ENCODE measurements at regions of chr5 and their contacts with region 1.

Region 1: DNA sequence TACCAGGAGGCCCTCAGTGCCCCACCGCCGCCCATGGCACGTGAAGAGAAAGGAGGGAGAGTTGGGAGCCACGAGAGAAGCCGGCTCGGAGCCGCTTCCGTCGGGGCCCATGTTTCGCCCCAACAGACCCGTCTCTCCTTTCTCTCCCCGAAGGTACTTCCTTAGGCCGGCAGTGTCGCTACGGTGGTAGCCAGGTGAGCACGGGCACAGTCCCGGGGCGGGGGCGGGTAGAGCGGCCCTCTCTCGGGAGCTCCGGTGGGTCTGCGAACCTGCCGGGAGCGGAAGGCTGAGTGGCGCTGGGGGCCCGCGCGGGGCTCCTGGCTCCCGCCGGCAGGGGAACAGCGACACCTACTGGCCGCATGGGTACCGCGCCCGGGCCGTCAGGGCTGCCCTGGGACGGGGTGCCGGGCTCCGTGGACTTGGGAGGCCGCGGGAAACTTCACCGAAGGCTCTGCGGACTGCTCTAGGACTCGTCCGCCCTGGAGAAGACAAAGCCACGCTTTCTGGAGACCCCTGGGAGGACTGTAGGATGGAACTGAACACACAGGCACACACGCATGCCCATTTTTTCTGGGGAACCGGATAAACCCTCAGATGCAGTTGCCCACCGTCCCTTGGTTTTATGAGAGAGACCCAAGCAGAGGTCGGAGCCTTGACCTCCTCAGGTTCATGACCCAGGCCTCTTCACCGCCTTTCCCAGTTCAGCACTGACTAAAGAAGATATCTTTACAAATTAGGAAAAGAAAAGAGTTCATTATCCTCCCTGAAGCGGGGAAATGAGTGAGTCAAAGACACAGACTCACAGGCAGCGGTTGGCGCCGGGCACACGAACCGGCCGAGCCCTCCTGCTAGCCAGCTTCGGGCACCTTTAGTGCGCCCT is 202.5 kb downstream of the MEF2C start:
- DNase-seq: peak; percentile 77
- ATAC-seq: peak; percentile 77
- H3K4me3 Mint-ChIP-seq: peak overlapping the region; percentile 24
- H3K27ac Mint-ChIP-seq: no peak overlapping the region
- H3K4me1 Mint-ChIP-seq: peaks cover 11% of the 10 kb centered on the region
- H3K27me3 Mint-ChIP-seq: peaks cover 75% of the 10 kb centered on the region
- CTCF ChIP-seq: peak; percentile 96

Region 2: GRCh38 chr5:88140856-88141752 is 539.4 kb before region 1 on chr5:
- CTCF ChIA-PET with region 1: interaction called, 3 read pairs
- POLR2A ChIA-PET with region 1: no interaction called
- intact Hi-C with region 1: loop called (anchors 5 kb)
- DNase-seq: peak; percentile 93
- ATAC-seq: peak; percentile 94
- H3K4me3 Mint-ChIP-seq: no peak overlapping the region
- H3K27ac Mint-ChIP-seq: no peak overlapping the region
- H3K4me1 Mint-ChIP-seq: peaks cover 15% of the 10 kb centered on the region
- H3K27me3 Mint-ChIP-seq: peaks cover 38% of the 10 kb centered on the region
- CTCF ChIP-seq: peak; percentile 59

Region 3: DNA sequence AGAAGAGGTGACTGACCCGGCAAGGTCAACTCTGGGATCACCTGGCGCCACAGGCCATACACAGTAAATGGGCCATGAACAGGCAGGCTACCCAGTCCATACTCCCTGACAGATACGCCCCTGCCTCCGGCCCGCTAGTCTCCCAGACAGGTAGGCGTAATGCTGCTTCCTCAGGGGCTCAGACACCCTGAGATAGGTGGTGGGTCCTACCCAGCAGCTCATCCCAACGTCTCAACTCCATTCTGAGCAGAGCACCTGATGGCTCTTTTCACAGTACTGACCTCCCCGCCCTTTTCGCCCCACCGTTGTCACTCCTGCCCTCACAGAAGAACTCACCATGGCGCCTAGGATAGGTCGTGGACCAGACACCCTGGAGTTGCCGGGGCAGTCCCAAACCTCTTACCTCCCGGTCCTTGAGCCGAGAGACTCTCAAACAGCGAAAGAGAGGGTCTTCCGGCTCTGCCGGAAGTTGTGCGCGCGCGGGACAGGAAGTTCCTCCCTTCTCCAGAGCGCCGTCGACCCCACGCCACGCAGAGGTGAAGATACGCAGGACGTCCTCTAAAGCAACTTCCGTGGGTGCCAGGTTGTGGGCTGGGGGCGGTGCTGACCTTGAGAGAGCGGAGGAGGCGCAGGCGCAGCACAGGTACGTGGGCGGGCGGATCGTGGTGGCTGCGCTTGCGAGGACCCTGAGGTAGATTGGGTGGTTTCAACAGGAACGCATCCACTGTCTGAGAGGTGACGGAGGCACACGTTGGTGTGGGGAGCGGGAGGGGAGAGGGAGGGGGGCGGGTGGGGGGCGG is 411.9 kb before region 1 on chr5 and contains the start of gene TMEM161B:
- CTCF ChIA-PET with region 1: no interaction called
- POLR2A ChIA-PET with region 1: no interaction called
- intact Hi-C with region 1: loop called (anchors 10 kb)
- DNase-seq: peak; percentile 97
- ATAC-seq: peak; percentile 96
- H3K4me3 Mint-ChIP-seq: peak within 1 kb of the TSS; percentile 95
- H3K27ac Mint-ChIP-seq: peak within 1 kb of the TSS; percentile 97
- H3K4me1 Mint-ChIP-seq: peaks cover 53% of the 10 kb centered on the region
- H3K27me3 Mint-ChIP-seq: no peaks in the 10 kb centered on the region
- CTCF ChIP-seq: no peak
- total RNA-seq, gene TMEM161B: 20.6 to 21.5 TPM

Measured in activated CD8-positive, alpha-beta T cell treated with anti-CD3 and anti-CD28 coated beads for 36 hours (primary cell).